A549 (cell line): ENCODE measurements at regions of chr2 and their contacts with region 1.

Region 1: DNA sequence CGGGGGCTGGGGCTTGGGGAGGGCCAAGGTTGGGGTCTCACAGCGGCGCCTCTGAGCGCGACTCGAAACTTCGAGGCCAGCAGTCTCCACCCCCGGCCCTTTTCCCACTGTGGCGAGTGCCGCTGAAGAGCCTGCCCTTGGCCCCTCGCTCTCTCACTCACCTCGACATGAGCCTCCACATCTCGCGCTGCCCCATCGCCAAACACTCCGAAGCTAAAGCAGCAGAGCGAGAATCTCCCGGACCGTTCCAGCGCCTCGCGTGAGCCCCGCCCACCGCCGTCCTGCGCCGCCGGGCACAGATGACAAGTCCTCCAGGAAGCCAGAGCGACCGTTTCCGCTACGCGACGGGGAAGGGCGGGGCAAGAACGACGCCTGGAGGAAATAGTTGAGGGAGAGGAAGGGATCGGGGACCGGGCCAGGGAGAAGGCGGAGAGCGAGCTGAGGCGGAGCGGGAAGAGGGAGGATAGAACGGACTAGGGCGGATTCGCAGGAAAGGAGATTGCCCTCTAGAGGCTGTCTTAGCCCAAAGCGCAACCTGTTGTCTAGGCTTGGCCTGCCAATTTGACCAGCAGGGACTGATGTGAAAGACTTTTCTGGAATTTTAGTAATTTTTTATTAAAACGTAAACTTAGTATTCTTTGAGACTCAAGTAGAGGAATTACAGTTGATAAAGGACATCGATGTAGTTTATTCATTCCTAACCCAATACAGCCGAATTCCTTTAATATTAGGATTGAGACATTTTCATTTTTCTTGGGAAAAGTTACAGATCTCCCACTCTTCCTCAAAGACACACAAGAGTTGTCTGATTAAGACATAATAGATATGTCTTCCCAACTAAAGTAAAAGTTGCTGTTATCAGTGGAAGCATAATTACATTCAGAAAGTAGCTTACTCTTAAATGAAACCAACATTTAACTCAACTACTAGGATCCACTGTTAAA is at the start of gene HIBCH:
- DNase-seq: peak; percentile 84 to 99
- ATAC-seq: peak; percentile 99
- H3K4me3 ChIP-seq: peak within 1 kb of the TSS; percentile 75
- H3K27ac ChIP-seq: peak within 1 kb of the TSS; percentile 82 to 91
- H3K4me1 ChIP-seq: peaks cover 14% of the 10 kb centered on the region
- CTCF ChIP-seq: peak; percentile 77
- EP300 ChIP-seq: no peak
- POLR2A ChIP-seq: peak; percentile 76
- RAD21 ChIP-seq: peak; percentile 30 to 37; a peak in 4 of 5 replicates
- polyA plus RNA-seq, gene HIBCH: 17.6 and 26.9 TPM in 2 replicates

Region 2: DNA sequence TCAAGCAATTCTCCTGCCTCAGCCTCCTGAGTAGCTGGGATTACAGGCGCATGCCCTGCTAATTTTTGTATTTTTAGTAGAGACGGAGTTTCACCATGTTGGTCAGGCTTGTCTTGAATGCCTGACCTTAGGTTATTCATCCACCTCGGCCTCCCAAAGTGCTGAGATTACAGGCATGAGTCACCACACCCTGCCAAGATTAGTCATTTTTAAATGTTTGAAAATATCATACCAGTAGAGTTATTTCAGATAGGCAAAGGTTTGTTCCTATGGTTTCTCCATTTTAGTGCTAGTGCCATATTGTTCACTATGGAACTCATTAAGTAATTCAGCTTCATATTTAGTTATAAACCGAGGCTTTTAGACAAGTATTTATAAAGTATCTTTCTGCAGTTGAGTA is 52.5 kb before region 1 on chr2:
- CTCF ChIA-PET with region 1: no interaction called
- POLR2A ChIA-PET with region 1: no interaction called
- DNase-seq: peak; percentile 5 to 68
- ATAC-seq: peak; percentile 78 to 85
- H3K4me3 ChIP-seq: peak overlapping the region; percentile 17; the same call in 1 of the 3 replicates
- H3K27ac ChIP-seq: peak overlapping the region; percentile 56 to 82; a peak in 5 of 6 replicates
- H3K4me1 ChIP-seq: peaks cover 38% of the 10 kb centered on the region
- CTCF ChIP-seq: no peak
- EP300 ChIP-seq: peak in 1 of 2 experiments; percentile 30; a peak in 1 of 5 replicates
- POLR2A ChIP-seq: no peak
- RAD21 ChIP-seq: no peak; a peak in 1 of 5 replicates

Region 3: GRCh38 chr2:190304404-190304803 is 15.4 kb before region 1 on chr2:
- CTCF ChIA-PET with region 1: interaction called, 12 read pairs
- POLR2A ChIA-PET with region 1: interaction called, 3 read pairs
- DNase-seq: no peak
- ATAC-seq: no peak
- H3K4me3 ChIP-seq: no peak overlapping the region
- H3K27ac ChIP-seq: no peak overlapping the region
- H3K4me1 ChIP-seq: no peaks in the 10 kb centered on the region
- CTCF ChIP-seq: no peak
- EP300 ChIP-seq: no peak
- POLR2A ChIP-seq: no peak
- RAD21 ChIP-seq: no peak

Region 4: GRCh38 chr2:191202881-191203397 is 883.1 kb after region 1 on chr2:
- CTCF ChIA-PET with region 1: no interaction called
- POLR2A ChIA-PET with region 1: no interaction called
- DNase-seq: no peak
- ATAC-seq: no peak
- H3K4me3 ChIP-seq: no peak overlapping the region
- H3K27ac ChIP-seq: peak overlapping the region; percentile 34 to 37; a peak in 4 of 6 replicates
- H3K4me1 ChIP-seq: 0 out of 3 replicates have a peak, but pooled peaks cover 4% of the 10 kb centered on the region
- CTCF ChIP-seq: no peak
- EP300 ChIP-seq: no peak
- POLR2A ChIP-seq: no peak
- RAD21 ChIP-seq: no peak